Prostate gland (tissue), 2 donors: ENCODE measurements at regions of chr5 and their contacts with region 1.

Region 1: GRCh38 chr5:177497292-177498033 is at the start of gene PDLIM7:
- DNase-seq: peak; percentile 95
- H3K4me3 ChIP-seq: peak within 1 kb of the TSS; percentile 57 to 78
- H3K27ac ChIP-seq: peak within 1 kb of the TSS; percentile 86 to 92
- H3K4me1 ChIP-seq: peaks cover 4% of the 10 kb centered on the region
- H3K27me3 ChIP-seq: no peaks in the 10 kb centered on the region
- CTCF ChIP-seq: peak in 1 of 4 experiments; percentile 5
- POLR2A ChIP-seq: peak; percentile 95
- total RNA-seq, gene PDLIM7: 155 to 235 TPM

Region 2: GRCh38 chr5:176415952-176416924 is 1081.2 kb before region 1 on chr5 and contains the start of gene CLTB:
- intact Hi-C with region 1: no loop called
- DNase-seq: peak; percentile 92
- H3K4me3 ChIP-seq: peak within 1 kb of the TSS; percentile 92 to 98
- H3K27ac ChIP-seq: peak within 1 kb of the TSS; percentile 83 to 85
- H3K4me1 ChIP-seq: no peaks in the 10 kb centered on the region
- H3K27me3 ChIP-seq: no peaks in the 10 kb centered on the region
- CTCF ChIP-seq: peak; percentile 83 to 98 (median 93)
- POLR2A ChIP-seq: peak; percentile 90
- total RNA-seq, gene CLTB: 105 to 125 TPM

Region 3: DNA sequence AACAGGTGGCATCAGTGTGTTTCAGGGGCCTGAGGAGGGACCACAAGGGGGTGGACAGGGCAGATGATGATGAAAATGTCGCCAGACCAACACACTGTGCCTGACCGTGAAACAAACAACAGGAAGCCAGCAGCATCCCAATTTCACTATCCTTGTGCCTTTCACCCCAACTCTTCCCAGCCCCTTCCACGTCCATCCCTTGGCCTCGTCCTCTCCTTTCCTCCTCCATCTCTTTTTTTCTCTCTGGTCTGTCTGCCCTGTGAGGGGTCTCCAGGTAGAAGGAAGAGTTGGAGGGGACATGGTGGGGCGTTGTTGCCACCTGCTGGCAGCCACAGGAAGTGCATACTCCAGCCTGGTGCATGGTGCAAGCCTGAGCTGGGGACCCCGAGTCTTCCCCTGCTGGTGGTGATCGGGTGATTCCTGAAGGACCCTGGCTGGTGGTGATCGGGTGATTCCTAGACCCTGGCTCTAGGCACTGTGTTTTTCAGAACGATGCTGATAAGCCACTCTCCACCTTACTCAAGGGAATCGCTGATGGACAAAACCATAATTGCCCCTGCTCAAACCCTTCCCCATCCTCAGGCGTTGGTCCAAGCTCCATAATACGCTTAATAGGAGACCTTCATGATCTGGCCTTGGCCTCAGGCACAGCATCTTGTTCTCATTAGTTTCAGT is 385.6 kb before region 1 on chr5:
- intact Hi-C with region 1: no loop called
- DNase-seq: no peak
- H3K4me3 ChIP-seq: no peak overlapping the region
- H3K27ac ChIP-seq: no peak overlapping the region
- H3K4me1 ChIP-seq: no peaks in the 10 kb centered on the region
- H3K27me3 ChIP-seq: no peaks in the 10 kb centered on the region
- CTCF ChIP-seq: peak; percentile 78 to 94 (median 86)
- POLR2A ChIP-seq: no peak

Region 4: GRCh38 chr5:177390363-177391300 is 106.8 kb before region 1 on chr5:
- intact Hi-C with region 1: loop called (anchors 5 kb)
- DNase-seq: peak; percentile 82
- H3K4me3 ChIP-seq: no peak overlapping the region
- H3K27ac ChIP-seq: peak overlapping the region; percentile 58 to 64
- H3K4me1 ChIP-seq: no peaks in the 10 kb centered on the region
- H3K27me3 ChIP-seq: no peaks in the 10 kb centered on the region
- CTCF ChIP-seq: peak; percentile 96 to 99 (median 97)
- POLR2A ChIP-seq: no peak